ENCODE measurements at regions of chr12 and their contacts with region 1.

Region 1: GRCh38 chr12:53321074-53321814 is at the start of gene AAAS:
- DNase-seq: peak; percentile 97
- ATAC-seq: peak; percentile 89
- total RNA-seq, gene AAAS: 40.9 TPM

Region 2: DNA sequence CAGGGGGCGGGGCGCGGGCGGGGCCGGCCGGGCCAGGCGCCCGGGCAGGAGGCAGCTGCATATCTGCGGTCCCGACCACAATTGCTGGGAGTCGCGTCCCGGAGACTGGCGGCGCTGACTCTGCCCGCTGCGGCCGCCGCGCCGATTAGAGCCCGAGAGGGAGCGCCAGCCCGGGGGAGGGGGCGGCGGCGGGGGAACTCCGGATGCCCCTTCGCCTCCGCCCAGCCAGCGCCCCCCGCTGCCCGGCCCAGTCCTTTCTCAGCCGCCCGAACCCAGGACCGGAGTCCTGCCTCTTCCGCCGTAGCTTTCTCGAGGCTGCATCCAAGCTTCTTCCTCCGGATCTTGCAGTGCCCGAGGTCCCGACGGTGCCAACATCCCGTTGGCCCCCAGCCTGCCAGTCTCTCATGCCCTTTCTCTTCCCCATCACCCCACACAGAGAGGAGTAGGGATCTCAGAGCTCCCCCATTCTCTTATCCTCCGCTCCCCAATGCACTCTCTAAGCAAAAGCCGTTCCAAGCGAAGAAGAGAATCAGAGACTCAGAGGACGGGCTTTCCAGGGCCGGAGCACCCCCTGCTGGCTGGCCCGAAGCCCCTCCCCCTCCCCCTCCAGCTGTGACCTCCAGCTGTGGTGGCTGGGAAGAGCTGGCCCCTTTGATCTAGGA is 23.7 kb after region 1 on chr12:
- intact Hi-C with region 1: loop called (anchors 1 kb)
- DNase-seq: peak; percentile 85
- ATAC-seq: peak; percentile 98

Region 3: DNA sequence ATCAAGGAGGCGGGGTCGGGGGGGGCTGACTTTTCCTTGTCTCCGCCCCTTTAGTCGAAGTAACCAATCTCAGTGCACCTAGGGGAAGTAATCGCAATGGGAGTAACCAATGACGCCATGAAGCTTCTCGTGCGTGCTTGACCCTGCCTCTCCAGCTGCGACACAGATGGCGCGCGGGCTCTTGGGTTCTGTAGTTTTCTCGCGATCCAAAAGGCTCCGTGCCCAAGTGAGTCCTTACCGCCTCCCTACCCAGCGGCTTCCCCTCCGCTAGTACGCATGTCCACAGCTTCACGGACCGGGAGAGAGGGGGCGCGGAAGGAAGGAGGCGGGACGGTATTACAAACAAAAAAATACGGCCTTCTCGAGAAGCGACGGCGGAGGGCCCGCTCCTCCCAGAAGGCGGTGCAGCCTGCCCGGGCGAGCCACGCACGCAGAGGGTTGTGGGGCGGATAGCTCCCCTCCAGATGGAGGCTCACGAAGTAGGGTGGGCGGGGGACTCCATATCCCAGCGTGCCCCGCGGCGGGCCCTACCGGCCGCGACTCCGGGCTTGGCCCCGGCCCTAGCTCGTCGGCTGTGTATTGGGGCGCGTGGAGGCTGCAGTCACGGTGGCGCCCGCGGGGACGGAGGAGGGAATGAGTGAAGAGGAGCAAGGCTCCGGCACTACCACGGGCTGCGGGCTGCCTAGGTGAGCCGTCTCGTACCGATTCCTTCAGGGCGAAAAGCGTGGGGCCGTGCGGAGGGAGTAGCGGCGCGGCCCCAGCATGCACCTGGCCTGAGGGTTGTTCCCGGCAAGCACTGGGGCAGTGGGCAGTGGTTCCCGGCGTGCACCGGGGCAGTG is 179.8 kb after region 1 on chr12 and contains the start of gene TARBP2:
- intact Hi-C with region 1: loop called (anchors 10 kb)
- DNase-seq: peak; percentile 99
- ATAC-seq: peak; percentile 88
- total RNA-seq, gene TARBP2: 10.8 TPM

Region 4: DNA sequence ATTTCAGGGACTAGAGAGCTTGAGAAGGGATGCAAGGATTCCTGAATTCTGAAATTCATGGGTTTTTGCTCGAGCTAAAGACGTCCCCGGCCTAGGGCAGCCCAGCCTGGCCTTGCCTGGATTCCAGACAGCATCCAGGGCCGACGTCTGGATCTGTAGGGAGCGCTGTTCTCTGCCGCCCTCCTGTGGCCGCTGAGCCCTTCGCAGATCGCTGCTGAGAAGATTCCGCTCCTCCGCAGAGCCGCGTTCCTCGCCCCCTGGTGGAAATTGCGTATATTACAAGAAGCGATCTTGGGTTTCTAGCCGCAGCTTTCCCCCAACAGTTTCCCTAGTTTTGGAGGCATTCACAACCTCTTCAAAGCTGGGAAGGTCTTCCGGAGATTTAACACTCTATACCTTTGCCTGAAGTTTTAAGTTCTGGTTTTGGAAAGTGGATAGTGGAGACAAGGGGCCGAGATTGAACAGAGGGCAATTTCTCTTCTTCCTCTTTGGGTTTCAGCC is 425.4 kb after region 1 on chr12:
- intact Hi-C with region 1: no loop called
- DNase-seq: peak; percentile 95
- ATAC-seq: peak; percentile 91

Measured in Right ventricle myocardium superior (tissue), 1 donor.